ENCODE measurements at regions of chr5 and their contacts with region 1.

Region 1: DNA sequence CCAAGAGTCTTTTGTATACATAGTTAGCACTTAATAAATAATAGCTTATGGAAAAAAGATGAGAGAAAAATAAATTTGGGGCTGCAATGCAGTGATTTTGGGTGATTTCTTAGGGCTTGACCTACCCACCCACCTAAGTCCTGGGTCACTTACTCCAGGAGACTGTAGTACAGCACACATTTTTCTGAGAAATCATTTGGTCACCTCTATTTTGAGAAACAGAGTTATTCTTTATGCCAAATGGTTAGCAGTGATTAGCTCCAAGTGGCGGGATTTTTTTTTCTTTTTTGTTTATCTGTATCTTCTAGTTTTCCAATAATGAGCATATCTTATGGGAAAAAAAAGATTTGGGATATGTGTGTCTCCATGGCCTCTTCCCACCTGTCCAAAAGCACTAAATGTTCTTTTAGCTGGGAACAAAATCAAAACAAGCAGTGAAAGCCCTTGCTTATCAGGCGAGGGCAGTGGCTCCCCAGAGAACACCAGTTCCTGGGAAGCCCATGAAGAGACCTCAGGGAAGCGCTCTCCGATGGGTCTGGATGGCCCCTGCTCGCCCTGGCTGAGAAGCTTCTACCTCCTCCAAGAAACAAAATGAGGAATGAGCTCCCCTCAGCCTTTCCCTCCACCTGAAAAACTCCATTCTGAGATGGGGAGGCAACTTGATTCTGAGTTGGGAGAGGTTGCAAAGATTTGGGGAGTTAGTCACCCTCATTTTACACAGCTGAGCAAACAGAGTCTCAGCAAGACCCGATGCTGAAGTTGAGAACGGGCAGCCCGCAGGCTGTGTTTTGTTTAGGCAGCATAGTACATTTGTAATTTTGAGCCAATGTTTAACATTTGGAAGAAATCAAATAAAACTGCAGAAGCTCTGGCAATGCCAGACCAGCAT is 69.9 kb downstream of the CYFIP2 start:
- DNase-seq: no peak
- H3K4me3 ChIP-seq: no peak overlapping the region
- H3K27ac ChIP-seq: no peak overlapping the region
- H3K4me1 ChIP-seq: no peaks in the 10 kb centered on the region
- H3K27me3 ChIP-seq: no peaks in the 10 kb centered on the region
- CTCF ChIP-seq: no peak
- POLR2A ChIP-seq: no peak

Region 2: DNA sequence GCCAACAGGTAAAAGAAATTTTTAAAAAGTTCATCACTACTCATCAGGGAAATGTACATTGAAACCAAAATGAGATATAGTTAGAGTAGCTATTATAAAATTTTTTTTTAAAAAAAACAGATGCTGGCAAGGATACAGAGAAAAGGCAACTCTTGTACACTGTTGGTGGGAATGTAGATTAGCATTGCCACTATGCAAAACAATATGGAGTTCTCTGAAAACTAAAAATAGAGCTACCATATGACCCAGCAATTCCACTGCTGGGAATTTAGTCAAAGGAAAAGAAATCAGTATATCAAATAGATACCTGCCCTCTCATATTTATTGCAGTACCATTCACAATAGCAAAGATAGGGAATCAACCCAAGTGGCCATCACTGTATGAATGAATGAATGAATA is 80.1 kb after region 1 on chr5:
- intact Hi-C with region 1: no loop called
- DNase-seq: no peak
- H3K4me3 ChIP-seq: no peak overlapping the region
- H3K27ac ChIP-seq: no peak overlapping the region
- H3K4me1 ChIP-seq: no peaks in the 10 kb centered on the region
- H3K27me3 ChIP-seq: no peaks in the 10 kb centered on the region
- CTCF ChIP-seq: no peak
- POLR2A ChIP-seq: no peak

Region 3: DNA sequence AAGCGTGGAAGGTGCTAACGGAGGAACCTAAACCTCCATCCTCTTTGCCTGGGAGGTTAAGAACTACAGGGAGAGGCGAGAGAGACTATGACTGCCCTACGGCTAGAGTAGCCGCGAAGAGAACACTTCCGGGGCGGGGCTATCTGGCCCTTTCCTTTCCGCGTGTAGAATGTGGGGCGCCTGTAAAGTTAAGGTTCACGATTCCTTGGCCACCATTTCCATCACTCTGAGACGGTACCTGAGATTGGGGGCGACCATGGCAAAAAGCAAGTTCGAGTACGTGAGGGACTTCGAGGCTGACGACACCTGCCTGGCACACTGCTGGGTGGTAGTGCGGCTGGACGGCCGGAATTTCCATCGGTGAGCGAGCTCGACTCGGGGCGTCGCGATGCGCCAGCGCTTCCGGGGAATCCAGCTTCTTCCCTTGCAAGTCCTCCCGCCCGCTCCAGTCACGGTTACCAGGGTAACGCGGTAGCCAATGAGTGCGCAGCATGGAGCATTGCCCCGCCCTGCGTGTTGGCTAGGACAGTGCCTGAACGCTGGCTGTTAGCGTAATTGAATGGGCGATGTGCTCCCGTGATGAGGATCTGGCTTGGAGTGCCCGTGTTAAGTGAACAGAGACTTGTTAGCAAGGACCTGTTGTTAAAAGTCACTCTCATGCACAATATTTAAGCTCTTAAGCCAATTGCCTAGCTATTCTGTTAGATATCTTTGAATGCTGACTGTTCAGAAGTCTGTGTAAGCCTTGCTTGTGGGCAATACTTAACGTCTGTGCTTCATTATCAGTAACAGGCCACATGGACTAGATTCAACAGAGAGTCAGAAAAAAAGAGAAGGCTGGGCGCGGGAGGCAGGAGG is 395.7 kb after region 1 on chr5 and contains the start of gene THG1L:
- intact Hi-C with region 1: loop called (anchors 10 kb)
- DNase-seq: peak; percentile 98 to 99
- H3K4me3 ChIP-seq: peak within 1 kb of the TSS; percentile 73 to 80
- H3K27ac ChIP-seq: peak within 1 kb of the TSS; percentile 93 to 97
- H3K4me1 ChIP-seq: no peaks in the 10 kb centered on the region
- H3K27me3 ChIP-seq: no peaks in the 10 kb centered on the region
- CTCF ChIP-seq: peak in 2 of 4 experiments; percentile 14 to 21
- POLR2A ChIP-seq: peak in 1 of 2 donors; percentile 67
- total RNA-seq, gene THG1L: 6.5 to 29.2 (median 19.6) TPM